CD4-positive, alpha-beta memory T cell (primary cell): ENCODE measurements at regions of chr14 and their contacts with region 1.

Region 1: DNA sequence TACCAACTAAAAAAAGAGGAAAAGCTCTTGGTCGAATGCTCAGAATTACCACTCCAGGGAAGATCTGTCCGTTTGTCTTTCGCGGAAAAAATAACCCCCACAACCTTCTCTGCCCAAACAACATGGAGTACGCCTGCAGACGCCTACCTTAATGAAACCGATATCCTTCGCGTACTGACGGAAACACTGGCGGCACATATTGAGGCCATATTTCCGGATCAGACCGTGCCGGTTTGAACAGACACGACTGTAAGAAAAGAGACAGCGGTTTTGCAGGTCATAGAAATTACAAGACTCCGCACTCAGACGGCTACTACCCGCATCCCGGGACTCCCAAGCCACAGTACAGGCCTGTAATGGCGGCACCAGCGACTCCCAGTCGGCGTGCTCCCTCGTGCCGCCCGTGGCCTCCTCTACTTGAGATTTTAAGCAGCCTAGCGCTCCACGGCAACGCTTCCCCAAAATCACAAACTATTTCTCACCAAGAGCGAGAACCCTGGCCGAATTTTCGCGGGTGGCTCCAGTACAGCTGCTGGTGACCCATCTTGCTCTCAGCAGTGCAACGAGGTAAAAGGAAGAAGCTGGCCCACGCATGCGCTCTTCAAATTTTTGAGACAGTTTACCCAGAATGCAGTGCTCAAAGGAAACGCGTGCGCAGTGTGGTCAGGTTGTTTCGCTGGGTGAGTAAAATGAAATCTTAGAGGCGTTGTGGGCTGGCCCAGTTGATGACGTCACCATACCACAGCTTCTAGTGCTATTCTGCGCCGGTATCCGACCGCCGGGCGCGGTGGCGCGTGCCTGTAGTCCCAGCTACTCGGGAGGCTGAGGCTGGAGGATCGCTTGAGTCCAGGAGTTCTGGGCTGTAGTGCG is at the start of gene RPS29:
- DNase-seq: peak; percentile 98 to 99 (median 99)
- H3K4me3 ChIP-seq: peak within 1 kb of the TSS; percentile 93 to 98
- H3K4me3 Mint-ChIP-seq: peak within 1 kb of the TSS; percentile 87 to 98 (median 95)
- H3K27ac ChIP-seq: peak within 1 kb of the TSS; percentile 95
- H3K27ac Mint-ChIP-seq: peak within 1 kb of the TSS; percentile 88 to 100 (median 99)
- H3K4me1 ChIP-seq: peaks cover 38% of the 10 kb centered on the region
- H3K4me1 Mint-ChIP-seq: peaks cover 29 to 62% (median 42%) of the 10 kb centered on the region in 4 donors
- H3K27me3 ChIP-seq: no peaks in the 10 kb centered on the region
- H3K27me3 Mint-ChIP-seq: peaks cover 0 to 4% of the 10 kb centered on the region in 2 donors
- total RNA-seq, gene RPS29: 3,602 to 3,749 TPM

Region 2: DNA sequence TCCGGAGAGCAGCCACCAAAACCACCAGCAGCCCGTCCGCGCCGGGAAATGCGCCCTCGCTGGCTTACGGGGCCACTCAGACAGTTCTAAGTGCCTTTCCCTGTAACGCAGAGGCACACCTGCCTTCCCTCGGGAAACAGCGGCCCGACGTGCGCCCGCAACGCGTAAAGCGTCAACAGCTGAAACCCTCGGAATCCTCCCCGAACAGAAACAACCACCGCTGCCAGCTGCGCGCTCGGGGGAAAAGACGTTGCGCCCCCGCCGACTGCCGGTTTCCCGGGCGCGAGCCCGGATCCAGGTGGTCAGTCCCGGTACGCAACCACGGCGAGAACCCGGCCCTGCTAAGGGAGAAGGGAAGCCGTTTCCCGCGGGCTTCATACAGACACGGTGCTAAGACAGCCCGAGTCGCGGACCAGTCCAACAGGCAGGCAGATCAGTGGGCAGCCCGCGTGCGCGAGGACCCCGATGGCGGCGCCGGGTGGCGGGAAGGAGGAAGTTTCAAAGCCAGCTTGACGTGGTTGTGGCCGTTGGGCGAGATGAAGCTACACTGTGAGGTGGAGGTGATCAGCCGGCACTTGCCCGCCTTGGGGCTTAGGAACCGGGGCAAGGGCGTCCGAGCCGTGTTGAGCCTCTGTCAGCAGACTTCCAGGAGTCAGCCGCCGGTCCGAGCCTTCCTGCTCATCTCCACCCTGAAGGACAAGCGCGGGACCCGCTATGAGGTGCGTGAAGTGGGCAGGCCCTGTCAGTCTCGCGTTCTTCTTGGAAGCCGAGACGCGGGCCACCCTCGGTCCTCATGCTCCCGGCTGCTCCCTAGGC is 12.7 kb after region 1 on chr14 and contains the start of gene LRR1:
- CTCF ChIA-PET with region 1: interaction called, 20 read pairs
- POLR2A ChIA-PET with region 1: interaction called, 144 read pairs
- intact Hi-C with region 1: loop called (anchors 1 kb)
- DNase-seq: peak; percentile 84 to 93 (median 87)
- H3K4me3 ChIP-seq: peak within 1 kb of the TSS; percentile 70 to 97
- H3K4me3 Mint-ChIP-seq: peak within 1 kb of the TSS; percentile 92 to 100 (median 98)
- H3K27ac ChIP-seq: peak within 1 kb of the TSS; percentile 90
- H3K27ac Mint-ChIP-seq: peak within 1 kb of the TSS; percentile 93 to 99 (median 98)
- H3K4me1 ChIP-seq: peaks cover 9% of the 10 kb centered on the region
- H3K4me1 Mint-ChIP-seq: peaks cover 9 to 38% (median 25%) of the 10 kb centered on the region in 4 donors
- H3K27me3 ChIP-seq: no peaks in the 10 kb centered on the region
- H3K27me3 Mint-ChIP-seq: no peaks in the 10 kb centered on the region
- total RNA-seq, gene LRR1: 13.6 to 16.1 TPM

Region 3: GRCh38 chr14:49692811-49693734 is 107.0 kb after region 1 on chr14 and contains the start of gene KLHDC1:
- CTCF ChIA-PET with region 1: interaction called, 5 read pairs
- POLR2A ChIA-PET with region 1: interaction called, 11 read pairs
- intact Hi-C with region 1: no loop called
- DNase-seq: peak; percentile 77 to 83 (median 79)
- H3K4me3 ChIP-seq: peak within 1 kb of the TSS; percentile 49 to 72
- H3K4me3 Mint-ChIP-seq: peak within 1 kb of the TSS; percentile 87 to 99 (median 90)
- H3K27ac ChIP-seq: peak within 1 kb of the TSS; percentile 64
- H3K27ac Mint-ChIP-seq: peak within 1 kb of the TSS; percentile 77 to 96 (median 93)
- H3K4me1 ChIP-seq: peaks cover 23% of the 10 kb centered on the region
- H3K4me1 Mint-ChIP-seq: peaks cover 23 to 38% (median 25%) of the 10 kb centered on the region in 4 donors
- H3K27me3 ChIP-seq: no peaks in the 10 kb centered on the region
- H3K27me3 Mint-ChIP-seq: no peaks in the 10 kb centered on the region
- total RNA-seq, gene KLHDC1: 12.9 to 13.6 TPM

Region 4: GRCh38 chr14:50116181-50116956 is 530.3 kb after region 1 on chr14 and contains the start of gene VCPKMT:
- CTCF ChIA-PET with region 1: no interaction called
- POLR2A ChIA-PET with region 1: interaction called, 6 read pairs
- intact Hi-C with region 1: loop called (anchors 2 kb)
- DNase-seq: peak; percentile 93 to 96 (median 95)
- H3K4me3 ChIP-seq: peak within 1 kb of the TSS; percentile 65 to 69
- H3K4me3 Mint-ChIP-seq: peak within 1 kb of the TSS; percentile 97 to 98 (median 98)
- H3K27ac ChIP-seq: peak within 1 kb of the TSS; percentile 93
- H3K27ac Mint-ChIP-seq: peak within 1 kb of the TSS; percentile 96 to 100 (median 99)
- H3K4me1 ChIP-seq: peaks cover 34% of the 10 kb centered on the region
- H3K4me1 Mint-ChIP-seq: peaks cover 10 to 32% (median 23%) of the 10 kb centered on the region in 4 donors
- H3K27me3 ChIP-seq: no peaks in the 10 kb centered on the region
- H3K27me3 Mint-ChIP-seq: no peaks in the 10 kb centered on the region
- total RNA-seq, gene VCPKMT: 17.3 to 20.1 TPM